Activated CD4-positive, alpha-beta T cell treated with anti-CD3 and anti-CD28 coated beads for 36 hours (primary cell): ENCODE measurements at regions of chr20 and their contacts with region 1.

Region 1: DNA sequence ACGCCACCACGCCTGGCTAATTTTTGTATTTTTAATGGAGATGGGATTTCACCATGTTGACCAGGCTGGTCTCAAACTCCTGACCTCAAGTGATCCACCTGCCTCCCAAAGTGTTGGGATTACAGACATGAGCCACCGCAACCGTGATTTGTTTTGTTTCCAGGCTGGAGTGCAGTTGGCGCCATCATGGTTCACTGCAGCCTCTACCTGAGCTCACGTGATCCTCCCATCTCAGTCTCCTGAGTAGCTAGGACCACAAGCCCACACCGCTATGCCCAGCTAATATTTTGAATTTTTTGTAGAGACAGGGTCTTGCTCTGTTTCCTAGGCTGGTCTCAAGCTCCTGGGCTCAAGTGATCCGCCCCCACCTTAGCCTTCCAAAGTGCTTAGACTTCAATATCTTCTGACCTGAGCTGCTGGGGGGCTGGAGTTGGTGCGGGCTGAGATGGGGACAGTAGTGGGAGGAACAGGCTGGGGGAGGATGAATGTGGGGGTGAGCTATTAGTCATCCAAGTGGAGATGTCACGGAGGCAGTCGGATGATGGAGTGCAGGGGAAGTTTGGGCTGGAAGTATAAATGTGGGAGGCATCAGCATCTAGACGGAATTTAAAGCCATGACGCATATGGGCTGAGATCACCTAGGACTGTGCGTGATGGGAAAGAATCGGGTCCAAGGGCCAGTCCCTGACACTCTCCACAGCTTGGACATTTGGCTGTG is 23.1 kb upstream of the ZMYND8 start:
- DNase-seq: no peak
- ATAC-seq: no peak
- H3K4me3 Mint-ChIP-seq: no peak overlapping the region
- H3K27ac Mint-ChIP-seq: no peak overlapping the region
- H3K4me1 Mint-ChIP-seq: peaks cover 18% of the 10 kb centered on the region
- H3K27me3 Mint-ChIP-seq: peaks cover 2% of the 10 kb centered on the region

Region 2: DNA sequence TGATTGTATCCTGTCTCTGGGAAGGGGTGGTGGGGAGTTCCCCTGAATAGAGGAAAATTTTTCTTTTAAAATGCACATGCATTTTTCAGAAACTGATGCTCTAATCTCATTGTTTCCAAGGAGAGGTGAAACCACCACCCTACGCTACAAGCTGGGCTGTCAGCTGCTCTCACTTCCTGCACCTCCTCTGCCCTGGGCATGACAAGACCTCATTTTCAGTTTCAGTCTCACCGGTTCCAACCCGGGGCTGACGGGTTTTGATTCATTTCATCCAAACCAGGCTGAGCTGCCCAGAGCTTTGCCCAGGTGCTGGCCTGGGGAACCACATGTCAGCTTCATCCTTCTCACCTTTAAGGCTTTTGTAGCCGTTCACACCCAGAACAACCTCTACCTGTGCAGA is 385.3 kb before region 1 on chr20:
- CTCF ChIA-PET with region 1: no interaction called
- POLR2A ChIA-PET with region 1: no interaction called
- intact Hi-C with region 1: no loop called
- DNase-seq: peak; percentile 84
- ATAC-seq: peak; percentile 98
- H3K4me3 Mint-ChIP-seq: peak overlapping the region; percentile 42
- H3K27ac Mint-ChIP-seq: peak overlapping the region; percentile 64
- H3K4me1 Mint-ChIP-seq: peaks cover 22% of the 10 kb centered on the region
- H3K27me3 Mint-ChIP-seq: peaks cover 34% of the 10 kb centered on the region

Region 3: DNA sequence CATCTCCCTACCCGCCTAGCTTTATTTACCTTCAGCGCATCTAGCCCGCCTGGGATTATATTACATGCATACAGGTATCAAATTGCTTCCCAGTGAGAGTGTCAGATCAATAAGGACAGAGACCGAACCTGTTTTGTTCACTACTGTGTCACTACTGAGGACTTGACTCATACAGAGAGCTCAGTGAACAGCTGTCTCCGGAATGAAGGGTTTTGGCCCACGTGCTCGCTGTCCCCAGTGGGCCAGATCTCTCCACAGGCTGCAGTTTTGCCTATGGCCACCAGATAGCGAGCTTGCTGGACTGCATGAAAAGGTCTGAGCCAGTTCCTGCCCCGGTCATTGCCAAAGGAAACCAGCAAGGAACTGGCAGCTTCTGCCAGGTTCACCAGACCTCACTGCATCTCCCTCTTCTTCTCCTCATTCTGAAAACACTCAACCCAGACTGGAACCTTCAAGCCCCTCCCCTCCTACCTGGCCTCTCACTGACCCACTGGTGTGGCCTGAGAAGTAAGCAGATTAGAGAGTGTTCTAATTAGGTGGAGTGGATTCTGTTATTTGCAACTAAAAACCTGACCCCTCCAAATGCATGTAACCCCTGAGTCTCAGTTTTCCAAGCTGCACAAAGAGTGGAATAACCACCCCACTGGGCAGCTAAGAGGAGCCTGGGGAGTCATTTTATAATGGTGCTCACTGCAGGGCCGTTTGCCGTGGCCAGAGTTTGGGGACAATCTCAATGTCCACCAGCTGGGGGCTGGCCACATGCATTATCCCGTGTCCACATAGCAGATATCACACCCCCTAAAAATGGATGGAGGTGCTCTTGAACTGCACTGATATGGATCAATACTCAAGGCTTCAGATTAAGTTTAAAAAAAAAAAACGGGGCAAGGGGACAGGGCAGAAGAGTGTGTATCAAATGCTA is 173.8 kb before region 1 on chr20:
- CTCF ChIA-PET with region 1: interaction called, 38 read pairs
- POLR2A ChIA-PET with region 1: no interaction called
- intact Hi-C with region 1: loop called in 1 of 2 experiments (anchors 2 kb)
- DNase-seq: peak; percentile 82
- ATAC-seq: peak; percentile 88
- H3K4me3 Mint-ChIP-seq: no peak overlapping the region
- H3K27ac Mint-ChIP-seq: no peak overlapping the region
- H3K4me1 Mint-ChIP-seq: peaks cover 6% of the 10 kb centered on the region
- H3K27me3 Mint-ChIP-seq: no peaks in the 10 kb centered on the region

Region 4: GRCh38 chr20:47272893-47273590 is 106.5 kb before region 1 on chr20:
- CTCF ChIA-PET with region 1: interaction called, 411 read pairs
- POLR2A ChIA-PET with region 1: interaction called, 6 read pairs
- intact Hi-C with region 1: loop called (anchors 1 kb)
- DNase-seq: peak; percentile 64
- ATAC-seq: peak; percentile 69
- H3K4me3 Mint-ChIP-seq: no peak overlapping the region
- H3K27ac Mint-ChIP-seq: peak overlapping the region; percentile 88
- H3K4me1 Mint-ChIP-seq: peaks cover 44% of the 10 kb centered on the region
- H3K27me3 Mint-ChIP-seq: no peaks in the 10 kb centered on the region

Region 5: GRCh38 chr20:47326658-47327268 is 52.8 kb before region 1 on chr20:
- CTCF ChIA-PET with region 1: interaction called, 21 read pairs
- POLR2A ChIA-PET with region 1: no interaction called
- intact Hi-C with region 1: no loop called
- DNase-seq: no peak
- ATAC-seq: no peak
- H3K4me3 Mint-ChIP-seq: no peak overlapping the region
- H3K27ac Mint-ChIP-seq: no peak overlapping the region
- H3K4me1 Mint-ChIP-seq: peaks cover 40% of the 10 kb centered on the region
- H3K27me3 Mint-ChIP-seq: no peaks in the 10 kb centered on the region

Region 6: GRCh38 chr20:47392015-47392720 is 12.6 kb after region 1 on chr20:
- CTCF ChIA-PET with region 1: interaction called, 16 read pairs
- POLR2A ChIA-PET with region 1: no interaction called
- intact Hi-C with region 1: no loop called
- DNase-seq: peak; percentile 37
- ATAC-seq: peak; percentile 87
- H3K4me3 Mint-ChIP-seq: no peak overlapping the region
- H3K27ac Mint-ChIP-seq: peak overlapping the region; percentile 69
- H3K4me1 Mint-ChIP-seq: peaks cover 18% of the 10 kb centered on the region
- H3K27me3 Mint-ChIP-seq: no peaks in the 10 kb centered on the region

Region 7: DNA sequence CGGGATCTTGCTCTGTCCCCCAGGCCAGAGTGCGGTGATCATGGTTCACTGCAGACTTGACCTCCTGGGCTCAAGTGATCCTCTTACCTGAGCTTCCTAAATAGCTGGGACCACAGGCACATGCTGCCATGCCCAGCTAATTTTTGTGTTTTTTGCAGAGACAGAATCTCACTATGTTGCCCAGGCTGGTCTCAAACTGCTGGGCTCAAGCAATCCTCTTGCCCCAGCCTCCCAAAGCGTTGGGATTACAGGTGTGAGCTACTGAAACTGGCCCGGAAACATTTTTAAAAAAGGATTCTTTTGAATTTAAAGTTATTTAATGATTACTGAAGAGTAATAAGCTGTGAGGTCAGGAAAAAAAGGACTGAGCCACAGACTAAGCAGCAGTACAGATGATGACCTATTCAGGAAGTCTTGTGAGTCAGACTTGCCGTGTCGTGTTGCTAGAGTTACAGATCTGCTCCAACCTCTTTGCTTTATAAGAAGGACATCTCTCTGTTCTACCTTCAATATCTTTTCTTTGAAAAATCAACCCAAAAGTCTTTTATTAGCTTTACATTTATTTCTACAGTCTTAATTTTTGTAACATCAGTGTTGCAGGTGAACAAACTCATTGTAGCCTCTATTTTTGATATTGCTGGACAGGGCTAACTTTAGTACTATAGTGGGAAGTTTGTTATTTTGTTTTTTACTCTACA is 230.8 kb after region 1 on chr20:
- CTCF ChIA-PET with region 1: interaction called, 10 read pairs
- POLR2A ChIA-PET with region 1: no interaction called
- intact Hi-C with region 1: no loop called
- DNase-seq: peak; percentile 93
- ATAC-seq: peak; percentile 90
- H3K4me3 Mint-ChIP-seq: peak overlapping the region; percentile 46
- H3K27ac Mint-ChIP-seq: peak overlapping the region; percentile 90
- H3K4me1 Mint-ChIP-seq: peaks cover 82% of the 10 kb centered on the region
- H3K27me3 Mint-ChIP-seq: no peaks in the 10 kb centered on the region